Astrocyte of the cerebellum (primary cell): ENCODE measurements at regions of chr11 and their contacts with region 1.

Region 1: GRCh38 chr11:128831174-128832120 is 35.6 kb downstream of the KCNJ1 start:
- DNase-seq: peak; percentile 69
- H3K4me3 ChIP-seq: no peak overlapping the region
- CTCF ChIP-seq: peak; percentile 78

Region 2: DNA sequence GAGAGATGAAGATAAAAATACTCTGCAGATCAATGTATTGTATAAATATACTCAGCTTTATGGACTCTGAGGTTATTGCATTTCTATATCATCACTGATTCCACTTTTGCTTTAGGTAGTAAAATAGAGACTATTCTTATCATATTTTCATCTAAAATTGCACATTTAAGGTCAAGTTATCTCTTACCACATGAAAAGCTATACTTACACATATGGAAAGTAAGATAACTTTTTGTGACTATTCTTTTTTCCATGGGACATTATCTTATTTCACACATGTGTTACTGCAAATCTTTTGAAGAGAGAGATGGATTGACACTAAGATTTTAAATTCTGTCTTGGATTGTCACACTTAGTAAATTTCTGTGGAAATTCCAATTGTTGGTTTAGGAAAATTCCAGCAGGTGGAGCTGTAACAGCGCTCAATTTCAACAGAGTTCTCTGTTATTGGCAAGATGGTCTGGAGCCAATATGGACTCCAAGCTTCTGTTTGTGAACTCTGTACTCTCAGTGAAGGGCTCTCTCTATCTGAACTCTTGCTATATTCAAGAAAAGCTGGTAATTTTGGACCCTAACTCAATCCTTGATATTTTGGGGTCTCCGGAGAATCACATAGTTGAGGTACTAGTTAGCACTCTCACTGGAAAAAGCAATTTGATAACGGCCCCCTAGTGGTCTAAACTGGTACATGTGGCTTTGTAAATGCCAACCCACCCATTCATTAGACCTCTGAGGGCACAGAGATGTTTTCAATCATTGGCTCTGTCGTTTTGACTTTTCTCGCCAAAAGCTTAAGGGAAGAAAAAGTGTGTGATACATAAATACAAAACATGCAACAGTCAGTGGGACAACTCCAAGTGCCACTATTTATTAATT is 673.8 kb before region 1 on chr11:
- in situ Hi-C with region 1: loop called (anchors 10 kb)
- DNase-seq: peak; percentile 73
- H3K4me3 ChIP-seq: no peak overlapping the region
- CTCF ChIP-seq: peak; percentile 93

Region 3: GRCh38 chr11:128290106-128290840 is 541.2 kb before region 1 on chr11:
- in situ Hi-C with region 1: loop called (anchors 25 kb)
- DNase-seq: peak; percentile 87
- H3K4me3 ChIP-seq: no peak overlapping the region
- CTCF ChIP-seq: peak; percentile 73

Region 4: GRCh38 chr11:128643661-128644317 is 187.7 kb before region 1 on chr11:
- in situ Hi-C with region 1: loop called (anchors 10 kb)
- DNase-seq: no peak
- H3K4me3 ChIP-seq: no peak overlapping the region
- CTCF ChIP-seq: no peak